H1 (cell line): ENCODE measurements at regions of chr2 and their contacts with region 1.

Region 1: GRCh38 chr2:233584210-233584729 is 17.7 kb upstream of the USP40 start:
- DNase-seq: no peak
- H3K4me3 ChIP-seq: no peak overlapping the region
- H3K27ac ChIP-seq: no peak overlapping the region
- H3K4me1 ChIP-seq: peaks cover 0 to 3% (median 0%) of the 10 kb centered on the region in 4 experiments; a peak in 1 of 7 replicates
- H3K27me3 ChIP-seq: no peaks in the 10 kb centered on the region
- CTCF ChIP-seq: no peak
- EP300 ChIP-seq: no peak
- POLR2A ChIP-seq: no peak
- RAD21 ChIP-seq: no peak

Region 2: GRCh38 chr2:233443468-233444183 is 140.6 kb before region 1 on chr2:
- CTCF ChIA-PET with region 1: no interaction called
- POLR2A ChIA-PET with region 1: no interaction called
- DNase-seq: peak in 1 of 2 experiments; percentile 77
- H3K4me3 ChIP-seq: no peak overlapping the region
- H3K27ac ChIP-seq: no peak overlapping the region
- H3K4me1 ChIP-seq: no peaks in the 10 kb centered on the region; a peak in 1 of 7 replicates
- H3K27me3 ChIP-seq: no peaks in the 10 kb centered on the region
- CTCF ChIP-seq: peak; percentile 57 to 89 (median 80)
- EP300 ChIP-seq: no peak
- POLR2A ChIP-seq: no peak
- RAD21 ChIP-seq: peak; percentile 85 to 91

Region 3: DNA sequence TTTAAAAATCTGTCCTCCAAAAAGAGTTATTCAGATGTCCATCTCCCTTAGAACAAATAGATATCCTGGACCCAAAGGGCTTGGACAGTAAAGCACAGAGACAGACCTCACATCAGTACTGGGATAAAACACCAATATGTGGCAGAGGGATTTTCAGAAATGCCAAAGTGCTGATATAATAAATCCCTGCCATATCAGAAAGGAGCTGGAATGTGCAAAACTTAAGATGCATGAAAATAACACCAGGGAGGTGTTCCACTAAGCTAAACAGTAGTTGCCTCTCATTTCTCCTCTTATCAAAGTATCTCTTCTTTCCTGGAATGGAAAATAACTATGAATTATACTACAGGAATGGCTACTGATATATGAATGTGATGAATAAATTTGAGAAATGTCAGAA is 30.9 kb before region 1 on chr2:
- CTCF ChIA-PET with region 1: no interaction called
- POLR2A ChIA-PET with region 1: no interaction called
- DNase-seq: no peak
- H3K4me3 ChIP-seq: no peak overlapping the region
- H3K27ac ChIP-seq: no peak overlapping the region
- H3K4me1 ChIP-seq: 0 out of 7 replicates have a peak, but pooled peaks cover 0 to 3% (median 0%) of the 10 kb centered on the region in 4 experiments
- H3K27me3 ChIP-seq: no peaks in the 10 kb centered on the region
- CTCF ChIP-seq: no peak
- EP300 ChIP-seq: no peak
- POLR2A ChIP-seq: no peak
- RAD21 ChIP-seq: no peak

Region 4: GRCh38 chr2:233566141-233566960 is 17.9 kb before region 1 on chr2 and contains the start of gene USP40:
- CTCF ChIA-PET with region 1: no interaction called
- POLR2A ChIA-PET with region 1: interaction called, 10 read pairs
- DNase-seq: peak; percentile 83 to 87
- H3K4me3 ChIP-seq: peak within 1 kb of the TSS; percentile 81 to 88 (median 85)
- H3K27ac ChIP-seq: peak within 1 kb of the TSS; percentile 90; the same call in 1 of the 2 replicates
- H3K4me1 ChIP-seq: peaks cover 0 to 4% (median 0%) of the 10 kb centered on the region in 4 experiments; a peak in 1 of 7 replicates
- H3K27me3 ChIP-seq: no peaks in the 10 kb centered on the region; a peak in 1 of 7 replicates
- CTCF ChIP-seq: no peak
- EP300 ChIP-seq: no peak
- POLR2A ChIP-seq: peak; percentile 74 to 87
- RAD21 ChIP-seq: no peak
- total RNA-seq, gene USP40: 12.0 and 12.9 TPM in 2 replicates